Activated CD8-positive, alpha-beta T cell treated with anti-CD3 and anti-CD28 coated beads for 36 hours (primary cell): ENCODE measurements at regions of chr17 and their contacts with region 1.

Region 1: DNA sequence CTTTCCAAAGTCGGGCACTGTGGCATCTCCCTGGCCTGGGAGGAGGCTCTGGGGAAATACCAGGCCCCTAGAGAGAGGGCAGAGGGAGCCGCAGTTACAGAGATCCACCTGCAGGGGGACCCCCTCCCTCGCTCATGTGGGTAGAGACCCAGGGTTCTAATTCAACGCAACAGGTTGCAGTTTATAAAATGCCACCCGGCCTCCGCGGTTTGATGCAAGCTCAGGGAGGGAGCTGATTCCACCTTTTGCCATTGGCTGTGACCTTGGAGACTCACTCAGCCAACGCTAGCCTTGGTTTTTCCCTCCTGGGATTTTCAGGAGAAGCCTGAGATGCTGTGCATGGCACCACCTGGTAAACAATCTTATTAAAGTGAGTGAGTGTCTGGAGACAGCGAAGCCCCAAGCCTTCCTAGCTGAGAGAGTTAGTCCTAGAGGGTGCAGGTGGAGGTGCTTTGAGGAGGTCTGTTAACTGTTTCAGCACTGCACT is 12.1 kb downstream of the TTLL6 start:
- DNase-seq: peak; percentile 75
- ATAC-seq: peak; percentile 100
- H3K4me3 Mint-ChIP-seq: no peak overlapping the region
- H3K27ac Mint-ChIP-seq: no peak overlapping the region
- H3K4me1 Mint-ChIP-seq: no peaks in the 10 kb centered on the region
- H3K27me3 Mint-ChIP-seq: peaks cover 6% of the 10 kb centered on the region
- CTCF ChIP-seq: peak; percentile 98

Region 2: GRCh38 chr17:48791128-48792032 is 13.6 kb before region 1 on chr17:
- CTCF ChIA-PET with region 1: interaction called, 17 read pairs
- POLR2A ChIA-PET with region 1: no interaction called
- intact Hi-C with region 1: no loop called
- DNase-seq: peak; percentile 53
- ATAC-seq: peak; percentile 85
- H3K4me3 Mint-ChIP-seq: no peak overlapping the region
- H3K27ac Mint-ChIP-seq: no peak overlapping the region
- H3K4me1 Mint-ChIP-seq: peaks cover 11% of the 10 kb centered on the region
- H3K27me3 Mint-ChIP-seq: peaks cover 18% of the 10 kb centered on the region
- CTCF ChIP-seq: peak; percentile 40

Region 3: DNA sequence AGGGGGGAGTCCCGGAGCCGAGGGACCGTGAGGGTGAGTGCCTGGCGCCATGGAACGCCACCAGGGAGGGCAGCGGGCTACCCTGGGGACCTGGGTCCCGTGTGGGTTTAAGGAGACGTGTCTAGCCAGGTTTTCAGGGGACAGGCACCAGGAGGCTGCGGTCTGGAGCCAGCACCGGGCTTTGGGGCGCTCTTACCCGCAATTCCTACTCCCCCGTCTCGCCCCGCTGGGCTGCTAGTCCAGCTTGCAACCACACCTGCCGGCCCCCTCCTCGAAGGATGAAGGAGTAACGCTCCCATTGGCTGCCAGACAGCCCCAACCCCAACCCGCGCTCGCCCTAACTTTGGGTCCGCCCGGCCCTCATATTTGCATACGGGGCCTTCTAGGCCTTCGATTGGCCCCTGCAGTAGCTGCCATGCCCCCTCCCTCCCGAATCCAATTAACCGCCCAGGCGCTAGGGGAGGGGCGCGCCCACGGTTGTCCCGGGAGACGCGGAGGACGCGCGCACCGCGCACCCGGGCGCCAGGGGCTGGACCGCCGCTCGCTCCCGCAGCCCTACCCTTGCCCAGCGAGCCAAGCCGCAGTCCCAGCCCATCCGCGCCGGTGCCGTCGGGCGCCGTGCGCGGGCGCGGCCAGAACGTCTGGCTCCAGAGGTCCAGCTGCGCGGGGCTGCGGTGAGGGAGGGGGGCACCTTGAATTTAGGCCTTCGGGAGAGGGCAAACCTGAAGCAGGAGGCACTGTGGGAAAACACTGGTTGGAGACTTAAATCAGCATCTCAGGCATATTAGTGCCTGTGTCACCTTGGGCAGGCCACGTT is 12.0 kb after region 1 on chr17 and contains the start of gene TTLL6:
- CTCF ChIA-PET with region 1: interaction called, 50 read pairs
- POLR2A ChIA-PET with region 1: no interaction called
- intact Hi-C with region 1: no loop called
- DNase-seq: peak; percentile 76
- ATAC-seq: peak; percentile 94
- H3K4me3 Mint-ChIP-seq: peak within 1 kb of the TSS; percentile 63
- H3K27ac Mint-ChIP-seq: no peak within 1 kb of the TSS
- H3K4me1 Mint-ChIP-seq: peaks cover 18% of the 10 kb centered on the region
- H3K27me3 Mint-ChIP-seq: peaks cover 46% of the 10 kb centered on the region
- CTCF ChIP-seq: no peak
- total RNA-seq, gene TTLL6: not detected

Region 4: DNA sequence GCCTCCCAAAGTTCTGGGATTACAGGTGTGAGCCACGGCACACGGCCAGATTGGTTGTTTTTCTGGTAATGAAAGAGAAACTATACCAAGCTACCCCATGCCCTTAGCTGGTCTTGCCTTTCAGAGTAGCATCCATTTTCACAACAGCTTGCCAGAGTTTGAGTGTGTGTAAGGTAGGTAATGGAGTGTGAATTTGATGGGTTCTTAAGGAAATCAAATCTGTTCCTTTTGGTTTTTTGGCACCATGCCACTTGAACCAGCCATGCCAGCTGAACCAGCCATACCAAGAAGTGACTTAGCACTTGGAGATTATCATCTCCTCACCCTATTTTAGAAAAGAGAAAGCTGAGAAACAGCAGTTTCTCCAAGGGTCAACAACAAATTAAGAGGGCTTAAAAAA is 31.0 kb after region 1 on chr17:
- CTCF ChIA-PET with region 1: interaction called, 25 read pairs
- POLR2A ChIA-PET with region 1: no interaction called
- intact Hi-C with region 1: no loop called
- DNase-seq: peak; percentile 28
- ATAC-seq: no peak
- H3K4me3 Mint-ChIP-seq: no peak overlapping the region
- H3K27ac Mint-ChIP-seq: no peak overlapping the region
- H3K4me1 Mint-ChIP-seq: peaks cover 77% of the 10 kb centered on the region
- H3K27me3 Mint-ChIP-seq: no peaks in the 10 kb centered on the region
- CTCF ChIP-seq: no peak

Region 5: DNA sequence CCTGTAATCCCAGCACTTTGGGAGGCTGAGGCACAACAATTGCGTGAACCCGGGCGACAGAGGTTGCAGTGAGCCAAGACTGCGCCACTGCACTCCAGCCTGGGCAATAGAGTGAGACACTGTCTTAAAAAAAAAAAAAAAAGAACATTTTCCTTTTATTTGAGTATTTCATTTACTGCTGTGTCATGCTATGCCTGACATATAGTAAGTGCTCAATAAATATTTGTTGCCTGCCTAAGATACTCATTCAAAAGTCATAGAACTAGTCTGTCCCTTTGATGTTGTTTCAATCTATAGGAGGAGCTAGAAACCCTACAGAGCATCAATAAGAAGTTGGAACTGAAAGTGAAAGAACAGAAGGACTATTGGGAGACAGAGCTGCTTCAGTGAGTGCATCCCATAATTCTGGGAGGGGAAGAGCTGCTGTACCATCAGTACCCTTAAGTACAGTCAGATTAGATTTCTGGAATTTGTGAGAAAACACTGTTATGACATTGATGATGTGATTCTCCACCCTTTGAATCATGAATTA is 45.9 kb after region 1 on chr17:
- CTCF ChIA-PET with region 1: interaction called, 31 read pairs
- POLR2A ChIA-PET with region 1: no interaction called
- intact Hi-C with region 1: no loop called
- DNase-seq: no peak
- ATAC-seq: peak; percentile 13
- H3K4me3 Mint-ChIP-seq: no peak overlapping the region
- H3K27ac Mint-ChIP-seq: no peak overlapping the region
- H3K4me1 Mint-ChIP-seq: peaks cover 5% of the 10 kb centered on the region
- H3K27me3 Mint-ChIP-seq: no peaks in the 10 kb centered on the region
- CTCF ChIP-seq: no peak

Region 6: DNA sequence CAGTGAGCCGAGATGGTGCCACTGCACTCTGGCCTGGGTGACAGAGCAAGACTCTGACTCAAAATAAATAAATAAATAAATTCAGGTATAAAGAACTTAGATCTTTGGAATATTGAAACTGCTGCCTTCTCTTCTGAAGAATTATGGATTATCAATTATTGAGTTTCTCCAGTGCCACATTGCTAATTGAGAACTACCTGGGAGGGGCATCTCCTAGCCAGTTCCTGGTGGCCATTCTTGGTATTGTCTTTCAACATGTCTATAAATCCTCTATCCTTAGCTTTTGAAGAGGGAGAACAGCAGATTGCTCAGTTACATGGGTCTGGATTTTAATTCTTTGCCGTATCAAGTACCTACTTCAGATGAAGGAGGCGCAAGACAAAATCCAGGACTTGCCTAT is 55.1 kb after region 1 on chr17:
- CTCF ChIA-PET with region 1: interaction called, 16 read pairs
- POLR2A ChIA-PET with region 1: no interaction called
- intact Hi-C with region 1: no loop called
- DNase-seq: no peak
- ATAC-seq: no peak
- H3K4me3 Mint-ChIP-seq: no peak overlapping the region
- H3K27ac Mint-ChIP-seq: no peak overlapping the region
- H3K4me1 Mint-ChIP-seq: peaks cover 2% of the 10 kb centered on the region
- H3K27me3 Mint-ChIP-seq: no peaks in the 10 kb centered on the region
- CTCF ChIP-seq: no peak